Breast epithelium (tissue), 4 donors: ENCODE measurements at regions of chr5 and their contacts with region 1.

Region 1: DNA sequence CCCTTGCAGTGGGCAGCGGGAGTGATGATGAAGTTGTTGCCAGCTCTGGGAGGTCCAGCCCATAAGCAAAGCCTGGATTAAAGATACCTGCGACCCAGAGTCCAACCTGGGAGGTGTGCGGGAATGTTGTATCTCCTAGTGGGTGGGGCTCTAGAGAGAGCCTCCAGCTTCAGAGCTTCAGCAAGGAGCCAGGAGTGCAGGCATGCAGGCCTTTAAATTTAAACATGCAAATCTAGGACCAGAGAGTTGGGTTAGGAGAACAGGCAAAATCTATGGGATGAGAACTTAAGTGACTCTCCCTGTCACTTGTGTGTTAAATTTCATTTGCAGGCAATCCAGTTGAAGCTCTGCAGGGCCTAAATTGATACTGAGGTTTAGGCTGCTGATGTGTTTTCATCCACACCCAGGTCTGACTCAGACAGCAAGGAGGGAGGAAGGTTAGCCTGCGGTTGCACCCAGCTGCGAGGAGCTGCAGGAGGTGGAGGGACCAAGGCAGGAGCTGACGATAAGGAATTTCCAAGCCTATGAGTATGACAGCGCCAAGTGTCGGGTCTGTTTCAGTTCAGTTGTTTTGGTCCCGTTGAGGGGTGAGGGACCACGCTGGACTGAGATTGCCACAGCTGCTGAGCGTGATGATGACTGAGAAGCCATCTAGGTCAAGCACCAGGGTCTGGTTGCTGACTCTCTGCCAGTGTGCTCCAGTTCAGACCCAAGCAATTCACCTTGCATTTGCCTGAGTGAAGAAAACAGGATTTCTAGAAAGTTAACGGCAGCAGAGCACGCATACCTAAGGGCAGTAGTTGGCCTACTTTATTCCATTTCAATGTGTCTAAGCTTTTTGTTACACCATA is 243.0 kb downstream of the ICE1 start:
- DNase-seq: no peak
- H3K4me3 ChIP-seq: no peak overlapping the region
- H3K27ac ChIP-seq: no peak overlapping the region
- H3K4me1 ChIP-seq: no peaks in the 10 kb centered on the region
- H3K27me3 ChIP-seq: no peaks in the 10 kb centered on the region
- CTCF ChIP-seq: no peak
- POLR2A ChIP-seq: no peak

Region 2: GRCh38 chr5:4905674-4906520 is 759.6 kb before region 1 on chr5:
- intact Hi-C with region 1: no loop called
- DNase-seq: peak in 1 of 2 donors; percentile 18
- H3K4me3 ChIP-seq: no peak overlapping the region
- H3K27ac ChIP-seq: peak overlapping the region in 1 of 2 donors; percentile 44
- H3K4me1 ChIP-seq: no peaks in the 10 kb centered on the region
- H3K27me3 ChIP-seq: no peaks in the 10 kb centered on the region
- CTCF ChIP-seq: peak in 1 of 3 donors; percentile 12
- POLR2A ChIP-seq: no peak

Region 3: DNA sequence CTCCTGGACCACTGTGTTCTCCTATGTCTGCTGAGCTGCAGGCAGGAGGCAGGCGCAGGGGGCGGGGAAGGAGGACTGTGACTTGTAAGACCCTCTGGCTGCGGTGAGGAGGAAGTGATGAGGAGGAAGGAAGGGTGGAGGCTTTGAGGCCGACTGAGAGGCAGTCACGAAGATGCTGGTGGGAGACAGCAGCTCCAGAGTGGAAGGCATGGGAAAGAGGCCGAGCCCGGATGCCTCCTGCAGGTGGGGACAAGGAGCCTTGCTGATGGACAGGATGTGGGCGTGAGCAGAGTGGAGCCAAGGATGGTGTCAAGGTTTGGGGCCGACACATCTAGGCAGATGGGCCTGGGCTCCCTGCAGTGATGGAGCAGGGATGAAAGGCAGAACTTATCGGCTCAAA is 317.3 kb before region 1 on chr5:
- intact Hi-C with region 1: loop called (anchors 5 kb)
- DNase-seq: no peak
- H3K4me3 ChIP-seq: no peak overlapping the region
- H3K27ac ChIP-seq: no peak overlapping the region
- H3K4me1 ChIP-seq: no peaks in the 10 kb centered on the region
- H3K27me3 ChIP-seq: no peaks in the 10 kb centered on the region
- CTCF ChIP-seq: no peak
- POLR2A ChIP-seq: no peak

Region 4: DNA sequence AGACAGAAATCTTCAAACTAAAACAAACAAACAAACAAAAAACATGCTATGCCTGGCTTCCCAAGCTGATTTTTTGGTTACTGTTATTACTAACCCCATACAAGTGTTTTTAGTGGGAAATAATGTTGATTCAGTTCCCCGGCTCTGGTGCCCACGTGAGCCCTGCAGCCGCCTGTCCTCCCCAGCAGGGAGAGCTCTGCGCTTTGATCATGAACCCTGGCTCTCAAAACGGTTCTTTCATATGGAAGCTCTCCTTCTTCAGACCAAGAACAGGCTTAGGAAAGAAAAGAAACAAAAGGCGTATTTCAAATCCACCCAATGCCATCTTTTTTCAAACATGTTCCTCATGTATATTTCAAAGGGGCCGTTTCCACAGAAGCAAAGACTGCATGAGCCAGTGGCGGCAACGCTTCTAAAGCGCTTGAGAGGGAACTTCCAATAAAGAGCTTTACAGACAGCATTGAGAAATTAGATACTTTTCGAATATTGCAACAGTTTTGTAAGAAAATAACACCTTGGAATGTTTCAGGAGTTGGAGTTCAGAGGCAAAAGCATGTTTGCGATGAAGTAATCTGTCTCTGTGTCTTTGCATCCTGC is 168.2 kb before region 1 on chr5:
- intact Hi-C with region 1: no loop called
- DNase-seq: no peak
- H3K4me3 ChIP-seq: no peak overlapping the region
- H3K27ac ChIP-seq: no peak overlapping the region
- H3K4me1 ChIP-seq: no peaks in the 10 kb centered on the region
- H3K27me3 ChIP-seq: no peaks in the 10 kb centered on the region
- CTCF ChIP-seq: peak in 2 of 3 donors; percentile 38 to 47
- POLR2A ChIP-seq: no peak

Region 5: DNA sequence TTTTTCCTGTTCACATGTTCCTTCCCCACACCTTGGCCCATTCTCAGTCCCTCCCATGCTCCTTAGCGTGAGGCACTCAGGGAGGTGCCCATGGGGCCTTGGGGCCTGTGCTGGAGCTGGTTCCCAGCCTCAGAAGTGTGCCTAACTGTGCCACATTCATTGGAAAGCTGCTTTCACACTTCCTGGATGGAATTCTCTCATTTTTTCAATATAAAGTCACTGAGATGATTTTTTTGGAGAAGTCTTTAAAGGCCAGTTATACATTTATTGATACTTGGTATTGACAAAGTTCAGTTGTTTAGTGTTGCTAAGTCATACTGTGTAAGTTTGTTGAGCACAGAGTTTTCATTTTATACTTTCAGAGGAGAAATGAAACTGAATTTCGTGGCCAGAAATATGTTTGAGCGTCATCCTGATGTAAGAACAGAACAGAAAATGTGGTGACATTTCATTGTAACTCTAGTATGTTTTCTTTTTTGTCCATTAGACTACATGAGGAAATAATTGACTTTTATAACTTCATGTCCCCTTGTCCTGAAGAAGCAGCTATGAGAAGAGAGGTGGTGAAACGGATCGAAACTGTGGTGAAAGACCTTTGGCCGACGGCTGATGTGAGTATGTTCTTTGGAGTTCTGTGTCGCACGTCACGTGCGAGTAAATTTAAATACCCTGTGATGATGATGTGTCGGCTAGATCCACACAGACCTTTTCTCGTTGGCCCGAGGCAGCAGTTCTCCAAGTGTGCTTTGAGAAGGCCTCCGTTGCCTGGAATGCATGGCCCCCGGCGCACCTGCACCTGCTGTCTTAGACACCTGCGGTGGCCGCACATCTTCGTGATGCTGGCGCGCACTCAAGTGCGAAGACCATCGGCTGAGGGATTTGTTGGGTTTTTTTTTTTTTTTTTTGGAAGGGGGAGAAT is 1071.8 kb after region 1 on chr5:
- intact Hi-C with region 1: loop called (anchors 5 kb)
- DNase-seq: no peak
- H3K4me3 ChIP-seq: no peak overlapping the region
- H3K27ac ChIP-seq: no peak overlapping the region
- H3K4me1 ChIP-seq: peaks cover 3 to 9% of the 10 kb centered on the region in 2 donors
- H3K27me3 ChIP-seq: no peaks in the 10 kb centered on the region
- CTCF ChIP-seq: no peak
- POLR2A ChIP-seq: no peak